WTC11 (cell line): ENCODE measurements at regions of chr9 and their contacts with region 1.

Region 1: GRCh38 chr9:35696525-35697215 is 6.9 kb upstream of the TPM2 start:
- DNase-seq: peak; percentile 81
- ATAC-seq: peak; percentile 97
- H3K4me3 Mint-ChIP-seq: no peak overlapping the region
- H3K27ac Mint-ChIP-seq: 0 out of 2 replicates have a peak overlapping the region, but pooled peaks have one; percentile 72
- H3K4me1 Mint-ChIP-seq: peaks cover 4% of the 10 kb centered on the region
- H3K27me3 Mint-ChIP-seq: no peaks in the 10 kb centered on the region
- CTCF ChIP-seq: peak; percentile 85

Region 2: DNA sequence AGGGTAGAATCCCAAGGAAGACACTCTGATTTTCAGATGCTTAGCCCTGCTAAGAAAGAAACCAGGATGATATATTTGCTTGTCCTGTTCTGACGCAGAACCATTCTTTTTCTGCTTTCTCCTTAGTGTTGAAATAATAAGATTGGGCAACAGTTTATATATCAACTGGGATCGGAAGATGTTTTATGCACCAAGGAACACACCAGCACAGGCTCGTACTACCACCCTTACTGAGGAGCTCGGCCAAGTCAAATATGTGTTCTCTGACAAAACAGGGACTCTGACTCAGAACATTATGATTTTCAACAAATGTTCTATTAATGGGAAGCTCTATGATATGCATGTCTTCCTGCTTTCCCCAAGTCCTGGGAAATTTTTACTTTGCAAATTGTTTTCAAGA is 225.8 kb before region 1 on chr9:
- CTCF ChIA-PET with region 1: no interaction called
- POLR2A ChIA-PET with region 1: no interaction called
- DNase-seq: no peak
- ATAC-seq: no peak
- H3K4me3 Mint-ChIP-seq: no peak overlapping the region
- H3K27ac Mint-ChIP-seq: no peak overlapping the region
- H3K4me1 Mint-ChIP-seq: no peaks in the 10 kb centered on the region
- H3K27me3 Mint-ChIP-seq: peaks cover 10% of the 10 kb centered on the region
- CTCF ChIP-seq: no peak

Region 3: DNA sequence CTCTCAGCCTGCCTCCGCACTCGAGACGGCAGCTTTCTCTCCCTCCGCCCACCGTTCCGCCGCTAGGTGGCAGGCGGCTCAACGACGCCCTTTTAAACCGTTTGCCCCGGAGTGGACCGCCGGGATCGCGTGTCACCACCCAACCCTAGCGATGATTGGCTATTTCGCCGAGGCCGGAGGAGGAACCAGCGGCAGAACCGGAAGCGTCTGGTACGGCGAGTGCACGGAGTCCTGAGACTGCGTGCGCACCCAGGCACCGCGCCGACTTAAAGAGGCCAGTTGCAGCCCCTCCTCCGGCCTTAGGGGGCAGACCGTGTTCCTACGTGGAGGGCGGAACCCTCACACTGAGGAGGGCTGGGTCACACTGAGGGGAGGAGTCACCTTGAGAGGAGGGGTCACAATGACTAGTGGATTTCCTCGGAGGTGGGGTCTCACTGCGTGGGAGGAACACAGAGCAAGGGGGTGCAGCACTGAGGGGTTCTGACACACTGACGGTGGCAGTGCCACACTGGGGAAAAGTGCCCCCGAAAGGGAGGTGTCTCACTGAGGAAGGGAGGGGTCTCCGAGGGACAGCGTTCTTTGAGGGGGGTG is 92.6 kb before region 1 on chr9:
- CTCF ChIA-PET with region 1: interaction called, 22 read pairs
- POLR2A ChIA-PET with region 1: no interaction called
- DNase-seq: peak; percentile 99
- ATAC-seq: peak; percentile 89
- H3K4me3 Mint-ChIP-seq: peak overlapping the region; percentile 99
- H3K27ac Mint-ChIP-seq: peak overlapping the region; percentile 100
- H3K4me1 Mint-ChIP-seq: peaks cover 25% of the 10 kb centered on the region
- H3K27me3 Mint-ChIP-seq: peaks cover 5% of the 10 kb centered on the region
- CTCF ChIP-seq: peak; percentile 83

Region 4: GRCh38 chr9:35646533-35647265 is 50.0 kb before region 1 on chr9:
- CTCF ChIA-PET with region 1: interaction called, 46 read pairs
- POLR2A ChIA-PET with region 1: no interaction called
- DNase-seq: peak; percentile 96
- ATAC-seq: peak; percentile 89
- H3K4me3 Mint-ChIP-seq: peak overlapping the region; percentile 88
- H3K27ac Mint-ChIP-seq: peak overlapping the region; percentile 82
- H3K4me1 Mint-ChIP-seq: peaks cover 43% of the 10 kb centered on the region
- H3K27me3 Mint-ChIP-seq: peaks cover 13% of the 10 kb centered on the region
- CTCF ChIP-seq: peak; percentile 90

Region 5: GRCh38 chr9:35664531-35665470 is 31.9 kb before region 1 on chr9 and contains the start of gene ARHGEF39:
- CTCF ChIA-PET with region 1: interaction called, 127 read pairs
- POLR2A ChIA-PET with region 1: interaction called, 38 read pairs
- DNase-seq: peak; percentile 91
- ATAC-seq: peak; percentile 97
- H3K4me3 Mint-ChIP-seq: peak within 1 kb of the TSS; percentile 81
- H3K27ac Mint-ChIP-seq: peak within 1 kb of the TSS; percentile 71; the same call in 1 of the 2 replicates
- H3K4me1 Mint-ChIP-seq: peaks cover 24% of the 10 kb centered on the region
- H3K27me3 Mint-ChIP-seq: no peaks in the 10 kb centered on the region; the same call in 1 of the 2 replicates
- CTCF ChIP-seq: no peak
- total RNA-seq, gene ARHGEF39: 23.8 to 26.6 TPM (median 26.5 TPM) in 3 replicates

Region 6: DNA sequence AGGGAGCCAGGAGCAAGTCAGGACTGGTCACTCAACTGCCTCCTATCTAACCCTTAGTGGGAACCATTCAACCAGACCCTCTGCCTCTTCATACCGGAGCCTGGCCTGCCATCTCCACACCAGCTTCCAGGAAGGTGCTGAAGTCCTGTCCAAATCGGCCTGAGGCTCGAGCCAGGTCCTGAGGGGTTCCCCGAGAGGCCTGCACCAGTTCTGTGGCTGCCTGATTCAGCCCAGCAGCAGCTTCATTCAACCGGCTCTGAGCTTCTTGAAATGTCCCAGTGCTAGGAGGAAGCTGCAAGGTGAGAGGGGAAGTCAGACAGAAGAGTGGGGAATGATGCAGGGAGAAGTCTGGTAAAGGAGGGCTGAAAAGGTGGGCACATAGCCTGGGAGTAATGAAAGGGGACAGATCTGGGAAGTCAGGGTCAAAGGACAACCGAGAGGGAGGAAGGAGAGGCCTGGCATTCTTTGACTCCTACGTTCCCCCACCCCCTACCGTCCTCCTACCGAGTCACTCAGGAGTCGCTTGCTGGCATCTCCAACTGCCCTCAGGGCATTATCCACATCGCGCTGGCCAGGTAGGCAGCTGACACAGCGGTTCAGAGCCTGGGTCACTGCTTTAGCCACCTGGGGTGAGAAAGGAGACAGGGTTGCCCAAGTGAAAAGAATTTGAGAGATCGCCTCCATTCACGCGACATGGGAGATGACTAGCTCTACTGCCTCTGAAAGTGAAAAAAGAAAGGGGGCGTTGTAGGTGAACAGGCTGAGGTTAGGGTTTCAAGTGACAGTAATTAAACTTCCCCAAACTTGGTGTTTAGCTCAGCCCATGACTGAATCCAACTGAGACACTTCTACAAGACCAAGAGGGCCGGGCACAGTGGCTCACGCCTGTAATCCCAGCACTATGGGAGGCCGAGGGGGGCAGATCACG is 15.1 kb after region 1 on chr9:
- CTCF ChIA-PET with region 1: interaction called, 29 read pairs
- POLR2A ChIA-PET with region 1: interaction called, 3 read pairs
- DNase-seq: no peak
- ATAC-seq: no peak
- H3K4me3 Mint-ChIP-seq: no peak overlapping the region
- H3K27ac Mint-ChIP-seq: no peak overlapping the region
- H3K4me1 Mint-ChIP-seq: no peaks in the 10 kb centered on the region
- H3K27me3 Mint-ChIP-seq: no peaks in the 10 kb centered on the region
- CTCF ChIP-seq: no peak

Region 7: GRCh38 chr9:35748858-35749514 is 52.3 kb after region 1 on chr9 and contains the starts of genes GBA2 and RGP1:
- CTCF ChIA-PET with region 1: interaction called, 20 read pairs
- POLR2A ChIA-PET with region 1: no interaction called
- DNase-seq: peak; percentile 83
- ATAC-seq: peak; percentile 84
- H3K4me3 Mint-ChIP-seq: peak within 1 kb of the TSS; percentile 92
- H3K27ac Mint-ChIP-seq: peak within 1 kb of the TSS; percentile 74
- H3K4me1 Mint-ChIP-seq: peaks cover 27% of the 10 kb centered on the region
- H3K27me3 Mint-ChIP-seq: no peaks in the 10 kb centered on the region
- CTCF ChIP-seq: no peak
- total RNA-seq, gene GBA2: 85.5 to 104 TPM (median 89.7 TPM) in 3 replicates
- total RNA-seq, gene RGP1: 29.7 to 30.0 TPM (median 30.0 TPM) in 3 replicates